ENCODE measurements at regions of chr2 and their contacts with region 1.

Region 1: DNA sequence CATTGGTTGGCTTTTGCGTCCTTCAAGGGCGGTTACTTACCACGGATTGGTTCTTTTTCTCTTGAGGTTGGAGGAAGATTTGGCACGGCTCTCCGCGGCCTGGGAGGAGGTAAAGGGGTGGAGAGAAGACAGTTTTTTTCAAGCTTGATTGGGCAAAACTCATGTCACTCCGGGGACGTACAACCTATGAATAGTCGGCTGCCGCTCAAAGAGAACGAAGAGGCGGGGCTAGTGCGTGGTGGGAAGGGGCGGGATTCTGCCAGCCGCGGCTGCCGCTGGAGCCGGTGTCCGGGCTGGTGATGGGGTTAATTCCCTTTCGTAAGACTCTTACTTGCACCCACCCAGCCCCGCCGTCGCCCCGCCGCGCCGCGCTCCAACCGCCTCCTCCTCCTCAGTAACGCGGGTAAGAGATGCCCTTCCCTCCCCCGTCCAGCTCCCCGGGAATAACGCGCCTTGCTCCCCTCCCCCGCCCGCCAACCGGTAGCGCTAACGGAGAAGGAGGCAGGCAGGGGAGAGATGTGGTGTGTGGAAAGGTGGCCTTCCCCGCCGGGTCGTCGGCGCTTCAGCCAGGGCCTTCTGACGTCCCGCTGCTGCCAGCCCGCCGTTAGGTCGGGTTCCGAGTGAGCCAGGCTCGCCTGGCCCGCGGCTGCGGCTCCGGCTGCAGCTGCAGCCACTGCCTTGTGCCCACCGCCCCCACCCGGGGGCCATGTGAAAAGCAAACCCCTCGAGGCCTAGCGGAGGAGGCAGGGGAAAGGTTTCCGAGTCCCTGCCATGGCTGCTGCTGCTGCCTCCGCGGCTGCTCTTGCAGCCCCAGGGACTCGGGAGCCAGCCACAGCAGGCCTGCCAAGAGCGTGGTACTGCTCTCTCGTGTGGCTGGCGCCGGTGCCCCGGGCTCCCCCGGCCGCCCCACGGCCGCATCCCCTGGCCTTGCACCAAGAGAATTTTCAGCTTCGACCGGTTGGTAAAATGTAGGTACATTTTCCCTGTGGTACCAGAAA is at the start of gene R3HDM1:
- DNase-seq: peak; percentile 100
- H3K4me3 ChIP-seq: peak within 1 kb of the TSS; percentile 89
- H3K27me3 ChIP-seq: no peaks in the 10 kb centered on the region
- CTCF ChIP-seq: no peak; the same call in 1 of the 2 replicates
- polyA plus RNA-seq, gene R3HDM1: 31.4 and 39.9 TPM in 2 replicates

Region 2: GRCh38 chr2:135391957-135392356 is 139.6 kb before region 1 on chr2:
- CTCF ChIA-PET with region 1: no interaction called
- POLR2A ChIA-PET with region 1: interaction called, 12 read pairs
- DNase-seq: no peak
- H3K4me3 ChIP-seq: no peak overlapping the region
- H3K27me3 ChIP-seq: no peaks in the 10 kb centered on the region
- CTCF ChIP-seq: no peak

Measured in BJ (cell line).